ENCODE measurements at regions of chrX and their contacts with region 1.

Region 1: GRCh38 chrX:48021026-48021900 is 14.5 kb downstream of the SPACA5 start:
- DNase-seq: peak; percentile 51 to 90
- H3K4me3 ChIP-seq: no peak overlapping the region
- CTCF ChIP-seq: no peak
- POLR2A ChIP-seq: no peak

Region 2: DNA sequence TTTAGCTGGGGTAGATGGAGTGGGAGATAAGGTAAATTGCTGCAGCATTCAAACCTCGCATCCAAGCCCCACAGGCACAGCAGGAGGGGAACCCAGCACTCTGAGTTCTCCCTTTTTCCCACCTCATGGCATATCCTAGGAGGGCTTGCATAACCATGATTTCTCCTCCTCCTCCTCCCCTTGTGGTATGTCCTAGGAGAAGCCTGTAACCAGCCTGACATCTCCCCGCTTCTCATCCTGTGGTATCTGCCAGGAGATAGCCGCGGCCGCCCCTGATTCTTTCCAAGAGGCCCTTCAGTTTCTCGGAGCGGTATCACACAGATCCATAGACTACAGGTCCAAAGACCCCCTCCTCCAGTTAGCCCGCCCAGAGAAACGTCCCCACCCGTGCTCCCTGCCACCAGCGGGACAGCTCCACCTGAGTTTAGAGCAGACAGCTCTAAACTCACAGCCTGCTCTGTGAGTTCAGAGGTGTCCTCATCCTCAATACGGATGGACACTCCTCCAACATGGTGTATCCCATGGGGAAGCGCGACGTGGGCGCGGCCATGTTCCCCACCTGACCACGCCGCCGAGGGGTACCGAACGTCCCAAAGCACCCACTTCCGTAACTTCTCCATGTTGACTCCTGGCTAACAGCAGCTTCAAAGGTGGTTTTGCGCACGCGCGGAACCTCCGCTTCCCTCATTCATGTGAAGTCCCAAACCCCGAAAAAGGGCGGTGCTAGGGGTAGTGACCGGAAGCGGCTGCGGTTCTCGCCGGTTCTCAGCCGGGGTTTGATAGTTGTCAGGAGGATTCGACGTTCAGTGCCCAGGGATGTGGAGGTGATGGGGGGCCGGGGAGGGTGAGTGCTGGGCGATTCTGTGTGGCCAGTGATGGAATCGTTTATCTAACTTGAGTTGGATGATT is 184.8 kb before region 1 on chrX and contains the start of gene ZNF81:
- intact Hi-C with region 1: loop called (anchors 10 kb)
- DNase-seq: peak; percentile 95 to 98
- H3K4me3 ChIP-seq: peak within 1 kb of the TSS; percentile 25
- CTCF ChIP-seq: no peak
- POLR2A ChIP-seq: no peak
- total RNA-seq, gene ZNF81: 3.5 to 6.3 (median 4.8) TPM